ENCODE measurements at regions of chr14 and their contacts with region 1.

Region 1: DNA sequence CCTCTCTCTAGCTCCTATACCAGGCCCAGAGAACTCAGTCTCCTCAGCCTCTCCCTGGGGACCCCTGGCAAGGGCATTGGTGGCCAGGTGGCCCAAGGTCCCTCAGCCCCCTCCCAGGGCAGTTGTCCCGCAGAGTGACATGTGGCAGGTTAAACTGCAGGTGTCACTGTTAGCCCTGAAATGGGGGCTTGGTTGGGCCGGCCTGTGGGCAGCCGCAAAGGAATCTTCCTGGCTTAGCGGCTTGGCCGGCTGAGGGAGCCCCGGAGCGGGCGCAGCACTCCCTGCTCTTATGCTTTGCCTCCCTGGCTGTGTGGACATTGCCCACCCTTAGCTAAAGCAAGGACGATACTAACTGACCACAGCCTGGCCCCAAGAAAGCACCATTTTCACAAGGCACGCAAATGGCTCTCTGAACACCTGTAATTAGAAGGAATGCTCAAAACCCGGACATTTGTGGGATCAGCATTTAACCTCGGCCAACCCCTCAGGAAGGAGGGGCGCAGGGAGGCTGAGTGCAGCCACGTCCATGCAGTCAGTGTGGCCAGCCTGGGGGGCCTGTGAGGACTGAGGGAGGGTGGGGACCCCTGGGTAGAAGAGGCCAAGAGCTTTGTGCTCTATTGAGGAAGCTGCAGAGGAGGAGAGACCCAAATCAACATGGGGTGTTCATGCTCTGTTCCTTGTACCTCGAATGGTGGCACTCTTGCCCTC is 82.2 kb downstream of the PAPOLA start:
- DNase-seq: peak; percentile 70 to 76 (median 74)
- ATAC-seq: peak; percentile 90
- H3K4me3 ChIP-seq: no peak overlapping the region
- H3K27ac ChIP-seq: no peak overlapping the region
- H3K4me1 ChIP-seq: peaks cover 6 to 19% of the 10 kb centered on the region in 2 experiments; a peak in 4 of 5 replicates
- H3K27me3 ChIP-seq: peaks cover 33 to 62% of the 10 kb centered on the region in 2 experiments
- CTCF ChIP-seq: peak; percentile 83 to 98 (median 95)
- EP300 ChIP-seq: no peak
- POLR2A ChIP-seq: no peak
- RAD21 ChIP-seq: peak; percentile 97

Region 2: DNA sequence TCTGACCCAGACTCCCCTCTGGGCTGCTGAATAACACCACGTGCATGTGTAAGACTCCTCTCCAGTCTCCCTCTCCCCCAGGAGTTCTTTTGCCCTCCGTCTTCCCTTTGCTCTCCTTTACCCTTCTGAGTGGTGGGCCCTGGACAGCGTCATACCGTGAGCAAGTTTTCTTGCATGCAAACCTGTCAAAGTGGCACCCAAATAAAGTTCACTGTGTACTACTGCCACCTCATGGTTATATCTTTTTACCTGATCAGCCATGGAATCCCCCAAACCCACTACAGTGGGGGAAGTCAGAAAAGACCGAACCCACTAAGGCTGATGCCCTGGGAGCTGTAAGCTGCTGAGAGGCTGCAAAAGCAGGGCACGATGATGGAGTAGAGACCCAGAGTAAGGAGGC is 81.7 kb after region 1 on chr14:
- CTCF ChIA-PET with region 1: no interaction called
- POLR2A ChIA-PET with region 1: no interaction called
- in situ Hi-C with region 1: loop called (anchors 5 kb)
- intact Hi-C with region 1: loop called (anchors 5 kb)
- DNase-seq: no peak
- ATAC-seq: no peak
- H3K4me3 ChIP-seq: no peak overlapping the region
- H3K27ac ChIP-seq: no peak overlapping the region
- H3K4me1 ChIP-seq: 0 out of 5 replicates have a peak, but pooled peaks cover 0 to 2% of the 10 kb centered on the region in 2 experiments
- H3K27me3 ChIP-seq: peaks cover 3 to 41% of the 10 kb centered on the region in 2 experiments; a peak in 3 of 5 replicates
- CTCF ChIP-seq: peak in 1 of 3 experiments; percentile 20; a peak in 1 of 6 replicates
- EP300 ChIP-seq: no peak
- POLR2A ChIP-seq: no peak
- RAD21 ChIP-seq: peak; percentile 24 to 35

Region 3: DNA sequence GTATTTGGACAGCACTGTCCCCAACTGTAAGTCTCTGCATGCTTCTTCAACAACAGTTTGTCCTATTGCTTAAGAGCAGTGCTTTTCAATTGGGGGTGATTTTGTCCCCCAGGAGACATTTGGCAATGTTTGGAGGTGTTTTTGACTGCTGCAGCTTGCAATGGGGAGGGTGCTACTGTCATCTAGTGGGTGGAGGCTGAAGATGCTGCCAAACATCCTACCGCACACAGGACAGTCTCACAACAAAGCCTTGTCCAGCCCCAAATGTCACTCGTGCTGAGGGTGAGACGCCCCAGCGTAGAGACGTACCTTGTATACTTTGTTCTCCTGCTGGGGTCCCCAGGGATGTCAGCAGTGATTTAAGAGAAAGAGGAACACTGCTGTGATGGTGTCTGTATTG is 94.7 kb after region 1 on chr14:
- CTCF ChIA-PET with region 1: no interaction called
- POLR2A ChIA-PET with region 1: no interaction called
- in situ Hi-C with region 1: loop called (anchors 5 kb)
- intact Hi-C with region 1: loop called (anchors 1 kb)
- DNase-seq: no peak
- ATAC-seq: peak; percentile 47; the same call in 2 of the 3 replicates
- H3K4me3 ChIP-seq: no peak overlapping the region
- H3K27ac ChIP-seq: no peak overlapping the region
- H3K4me1 ChIP-seq: no peaks in the 10 kb centered on the region
- H3K27me3 ChIP-seq: peaks cover 0 to 5% of the 10 kb centered on the region in 2 experiments; a peak in 2 of 5 replicates
- CTCF ChIP-seq: peak in 2 of 3 experiments; percentile 20 to 24; a peak in 2 of 6 replicates
- EP300 ChIP-seq: no peak
- POLR2A ChIP-seq: no peak
- RAD21 ChIP-seq: peak; percentile 32 to 40; a peak in 3 of 4 replicates

Region 4: DNA sequence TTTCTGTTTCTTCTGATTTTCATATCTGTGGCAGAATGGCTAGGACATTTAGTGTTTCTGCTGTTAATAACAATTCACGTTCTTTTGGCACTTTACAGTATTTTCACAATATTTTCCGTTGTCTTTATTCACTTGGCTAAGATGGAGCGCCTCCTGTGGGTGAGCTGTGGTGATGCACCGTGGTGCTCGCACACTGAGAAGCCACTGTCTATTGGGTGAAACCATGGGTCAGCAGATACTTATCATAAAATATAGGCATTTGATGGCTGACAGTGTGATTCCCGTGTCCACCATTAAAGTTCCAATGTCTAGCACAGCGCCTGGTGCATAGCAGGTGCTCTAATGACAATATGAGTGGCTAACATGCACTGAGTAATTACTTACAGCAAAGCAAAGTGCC is 354.6 kb after region 1 on chr14:
- CTCF ChIA-PET with region 1: no interaction called
- POLR2A ChIA-PET with region 1: no interaction called
- in situ Hi-C with region 1: no loop called
- intact Hi-C with region 1: loop called (anchors 10 kb)
- DNase-seq: peak; percentile 56 to 64 (median 64)
- ATAC-seq: peak; percentile 84
- H3K4me3 ChIP-seq: no peak overlapping the region
- H3K27ac ChIP-seq: no peak overlapping the region
- H3K4me1 ChIP-seq: peaks cover 0 to 1% of the 10 kb centered on the region in 2 experiments; a peak in 1 of 5 replicates
- H3K27me3 ChIP-seq: no peaks in the 10 kb centered on the region
- CTCF ChIP-seq: peak; percentile 66 to 87 (median 78)
- EP300 ChIP-seq: no peak
- POLR2A ChIP-seq: no peak
- RAD21 ChIP-seq: peak; percentile 25 to 77; a peak in 2 of 4 replicates

Region 5: DNA sequence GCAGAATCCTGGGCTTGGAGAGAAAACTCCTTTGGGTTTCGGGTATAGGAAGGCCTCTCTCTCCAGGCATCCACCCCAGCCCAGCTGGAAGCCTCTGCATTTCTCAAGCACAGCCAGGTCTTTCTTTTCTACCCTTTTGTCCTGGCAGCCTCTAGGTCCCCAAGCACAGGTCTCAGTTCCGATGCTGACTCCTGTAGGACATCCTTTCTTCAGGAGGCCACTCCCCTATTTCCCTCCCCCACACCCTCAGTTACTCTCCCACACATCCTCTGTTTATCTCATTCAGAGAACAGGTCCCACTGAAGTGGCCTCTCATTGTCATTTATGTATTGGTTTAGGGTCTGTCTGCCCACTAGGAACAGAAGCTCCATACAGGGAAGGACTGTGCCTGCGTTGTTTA is 565.4 kb after region 1 on chr14:
- CTCF ChIA-PET with region 1: no interaction called
- POLR2A ChIA-PET with region 1: no interaction called
- in situ Hi-C with region 1: loop called (anchors 10 kb)
- intact Hi-C with region 1: no loop called
- DNase-seq: peak in 3 of 4 experiments; percentile 8 to 17 (median 13)
- ATAC-seq: peak; percentile 47; the same call in 1 of the 3 replicates
- H3K4me3 ChIP-seq: no peak overlapping the region
- H3K27ac ChIP-seq: no peak overlapping the region
- H3K4me1 ChIP-seq: peaks cover 0 to 3% of the 10 kb centered on the region in 2 experiments; a peak in 2 of 5 replicates
- H3K27me3 ChIP-seq: peaks cover 0 to 13% of the 10 kb centered on the region in 2 experiments; a peak in 1 of 5 replicates
- CTCF ChIP-seq: no peak
- EP300 ChIP-seq: no peak
- POLR2A ChIP-seq: no peak
- RAD21 ChIP-seq: no peak

Measured in K562 (cell line).